H1 (cell line): ENCODE measurements at regions of chr4 and their contacts with region 1.

Region 1: GRCh38 chr4:150960818-150961217 is 54.3 kb downstream of the LRBA start:
- DNase-seq: peak; percentile 57 to 71
- H3K4me3 ChIP-seq: no peak overlapping the region
- H3K27ac ChIP-seq: no peak overlapping the region
- H3K4me1 ChIP-seq: no peaks in the 10 kb centered on the region
- H3K27me3 ChIP-seq: no peaks in the 10 kb centered on the region
- CTCF ChIP-seq: peak; percentile 56 to 84 (median 81)
- EP300 ChIP-seq: no peak
- POLR2A ChIP-seq: no peak
- RAD21 ChIP-seq: peak; percentile 41 to 57

Region 2: DNA sequence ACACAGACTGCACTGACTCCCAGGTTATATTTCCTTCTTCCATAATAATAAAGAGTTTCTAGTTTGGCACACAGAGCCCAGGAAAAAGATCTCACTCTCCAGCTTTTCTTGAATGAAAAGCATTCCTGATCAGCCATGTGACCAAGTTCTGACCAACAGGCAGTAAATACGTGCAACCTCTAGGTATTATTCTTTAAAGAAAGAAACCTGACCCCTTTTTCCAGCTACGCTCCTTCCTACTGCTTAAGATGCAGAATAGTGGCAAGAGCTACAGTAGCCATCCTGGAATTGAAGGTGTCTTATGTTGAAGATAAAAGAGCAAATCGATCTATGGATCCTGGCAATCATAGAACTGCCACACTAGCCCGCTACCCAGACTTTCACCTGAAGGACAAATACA is 22.4 kb before region 1 on chr4:
- CTCF ChIA-PET with region 1: interaction called, 11 read pairs
- POLR2A ChIA-PET with region 1: no interaction called
- DNase-seq: no peak
- H3K4me3 ChIP-seq: peak overlapping the region in 1 of 4 experiments; percentile 39; a peak in 2 of 8 replicates
- H3K27ac ChIP-seq: peak overlapping the region; percentile 62; the same call in 1 of the 2 replicates
- H3K4me1 ChIP-seq: peaks cover 0 to 4% (median 0%) of the 10 kb centered on the region in 4 experiments; a peak in 1 of 7 replicates
- H3K27me3 ChIP-seq: no peaks in the 10 kb centered on the region
- CTCF ChIP-seq: no peak
- EP300 ChIP-seq: no peak
- POLR2A ChIP-seq: no peak
- RAD21 ChIP-seq: no peak

Region 3: GRCh38 chr4:150950657-150951288 is 10.0 kb before region 1 on chr4:
- CTCF ChIA-PET with region 1: interaction called, 13 read pairs
- POLR2A ChIA-PET with region 1: interaction called, 3 read pairs
- DNase-seq: no peak
- H3K4me3 ChIP-seq: no peak overlapping the region
- H3K27ac ChIP-seq: no peak overlapping the region
- H3K4me1 ChIP-seq: no peaks in the 10 kb centered on the region
- H3K27me3 ChIP-seq: no peaks in the 10 kb centered on the region
- CTCF ChIP-seq: no peak
- EP300 ChIP-seq: no peak
- POLR2A ChIP-seq: no peak
- RAD21 ChIP-seq: no peak

Region 4: DNA sequence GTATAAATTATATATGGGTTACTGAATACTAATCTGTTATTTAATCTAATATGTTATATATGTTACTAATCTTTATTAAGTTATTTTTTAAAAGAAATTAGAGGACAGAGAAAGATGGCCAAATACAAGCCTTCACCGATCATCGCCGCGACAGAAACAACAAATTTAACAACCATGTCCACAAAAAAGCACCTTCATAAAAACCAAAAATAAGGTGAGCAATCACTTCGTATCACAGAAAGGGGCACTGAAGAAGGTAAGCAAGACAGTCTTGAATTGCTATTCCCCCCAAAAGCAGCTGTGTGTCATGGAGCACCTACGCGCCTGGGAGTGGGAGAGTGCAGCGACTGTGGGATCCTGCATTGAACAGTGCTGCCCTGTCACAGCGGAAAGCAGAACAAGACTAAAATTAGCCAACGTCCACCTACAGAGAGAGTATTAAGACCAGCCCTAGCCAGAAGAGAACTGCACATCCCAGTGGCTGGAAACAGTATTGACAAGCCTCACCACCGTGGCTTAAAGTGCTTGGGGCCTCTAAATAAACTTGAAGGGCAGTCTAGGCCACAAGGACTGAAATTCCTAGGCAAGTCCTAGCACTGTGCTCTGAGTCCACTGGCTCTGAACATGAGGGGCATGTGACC is 15.8 kb after region 1 on chr4:
- CTCF ChIA-PET with region 1: interaction called, 35 read pairs
- POLR2A ChIA-PET with region 1: interaction called, 3 read pairs
- DNase-seq: no peak
- H3K4me3 ChIP-seq: no peak overlapping the region
- H3K27ac ChIP-seq: peak overlapping the region; percentile 33; the same call in 1 of the 2 replicates
- H3K4me1 ChIP-seq: peaks cover 0 to 8% (median 0%) of the 10 kb centered on the region in 4 experiments; a peak in 3 of 7 replicates
- H3K27me3 ChIP-seq: no peaks in the 10 kb centered on the region
- CTCF ChIP-seq: peak; percentile 16 to 69 (median 37)
- EP300 ChIP-seq: no peak
- POLR2A ChIP-seq: no peak
- RAD21 ChIP-seq: peak; percentile 36 to 44